ENCODE measurements at regions of chr21 and their contacts with region 1.

Region 1: DNA sequence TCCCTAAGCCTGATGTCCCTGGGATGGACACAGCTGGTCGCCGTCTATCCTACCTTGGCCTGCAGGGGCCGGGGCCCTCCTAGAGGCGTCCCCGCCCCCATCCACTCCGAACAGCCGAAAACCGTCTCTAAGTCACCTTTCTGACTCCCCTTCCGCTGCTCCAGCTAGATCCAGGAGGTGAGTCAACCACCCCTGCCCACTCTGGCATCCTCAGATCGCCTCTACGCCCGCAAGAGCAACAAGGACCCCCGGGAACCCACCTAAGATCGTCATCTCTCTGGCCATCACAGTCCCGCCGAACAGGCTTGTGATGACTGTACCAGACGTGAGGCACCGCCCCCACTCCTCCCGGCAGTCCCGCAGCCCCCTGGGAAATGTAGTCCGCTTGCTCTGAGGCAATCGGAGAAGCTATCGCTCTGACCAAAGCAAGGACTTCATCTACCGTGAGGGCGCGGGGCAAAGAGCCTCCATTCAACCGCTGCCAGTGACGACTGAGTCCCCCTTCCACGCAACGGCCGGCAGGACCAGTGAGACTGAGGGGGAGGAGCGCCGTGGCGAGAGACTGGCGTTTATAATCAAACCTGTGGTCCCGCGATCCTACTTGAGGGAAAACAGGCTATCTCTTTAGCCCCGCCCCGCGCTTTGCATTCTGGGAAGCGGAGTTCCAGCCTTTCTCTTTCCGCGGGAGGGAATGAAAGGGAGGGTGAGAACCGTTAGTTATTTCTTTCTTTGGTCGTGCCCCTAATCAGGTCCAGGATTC is at the start of gene HSPA13:
- DNase-seq: peak; percentile 100
- H3K4me3 Mint-ChIP-seq: peak within 1 kb of the TSS; percentile 95
- H3K27ac Mint-ChIP-seq: peak within 1 kb of the TSS; percentile 95
- H3K4me1 Mint-ChIP-seq: peaks cover 27% of the 10 kb centered on the region
- H3K27me3 Mint-ChIP-seq: no peaks in the 10 kb centered on the region
- total RNA-seq, gene HSPA13: 48.5 to 49.1 TPM

Region 2: DNA sequence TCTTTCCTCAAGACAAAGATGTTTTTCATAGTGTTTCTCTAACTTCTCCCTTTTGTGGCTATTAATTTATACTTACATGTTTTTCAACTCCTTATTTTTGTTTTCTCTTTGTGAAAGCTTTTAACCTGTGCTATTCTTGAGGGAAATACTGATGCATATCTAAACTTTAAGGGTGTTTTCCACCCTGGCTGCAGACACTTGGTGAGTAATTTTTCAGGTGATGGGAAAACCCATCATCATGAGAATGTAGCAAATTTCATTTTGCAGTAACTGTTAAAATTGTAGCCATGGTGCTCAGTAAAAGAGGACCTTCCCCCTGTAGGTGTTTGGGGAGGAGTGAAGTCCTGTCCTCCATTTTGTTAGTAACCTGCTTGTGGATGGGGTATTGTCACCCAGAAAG is 296.5 kb before region 1 on chr21:
- CTCF ChIA-PET with region 1: no interaction called
- POLR2A ChIA-PET with region 1: no interaction called
- intact Hi-C with region 1: no loop called
- DNase-seq: peak; percentile 16
- H3K4me3 Mint-ChIP-seq: no peak overlapping the region
- H3K27ac Mint-ChIP-seq: peak overlapping the region; percentile 28
- H3K4me1 Mint-ChIP-seq: peaks cover 15% of the 10 kb centered on the region
- H3K27me3 Mint-ChIP-seq: no peaks in the 10 kb centered on the region

Region 3: DNA sequence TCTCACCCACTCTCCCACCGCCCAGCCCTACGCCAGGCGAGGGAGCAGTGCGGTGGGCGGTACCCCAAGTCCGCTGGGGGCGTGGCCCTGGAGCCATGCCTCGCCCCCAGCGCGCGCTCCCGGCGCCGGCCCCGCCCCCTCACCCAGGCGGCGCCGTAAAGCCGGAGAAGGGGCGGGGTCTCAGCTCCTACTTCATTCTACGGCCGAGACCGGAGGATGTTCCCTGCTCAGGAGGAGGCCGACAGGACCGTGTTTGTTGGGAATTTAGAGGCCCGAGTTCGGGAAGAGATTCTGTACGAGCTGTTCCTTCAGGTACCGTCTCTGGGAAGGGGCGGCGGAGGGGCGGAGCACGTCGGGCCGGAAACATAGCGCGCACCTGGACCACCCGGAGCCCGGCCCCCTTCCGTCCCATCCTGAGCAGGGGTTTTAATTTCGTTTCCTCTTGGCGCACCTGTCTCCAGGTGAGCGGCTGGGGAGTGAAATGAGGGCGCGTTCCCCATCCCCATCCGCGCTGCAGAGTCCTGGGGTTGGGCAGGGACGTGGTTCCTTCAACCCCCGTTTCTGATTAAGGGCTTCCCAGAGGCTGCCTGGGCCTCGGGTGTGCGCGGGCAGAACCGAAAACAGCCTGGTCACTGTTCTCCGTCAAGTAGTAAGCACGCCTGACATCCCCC is 166.9 kb before region 1 on chr21 and contains the start of gene RBM11:
- CTCF ChIA-PET with region 1: no interaction called
- POLR2A ChIA-PET with region 1: no interaction called
- intact Hi-C with region 1: loop called (anchors 1 kb)
- DNase-seq: peak; percentile 79
- H3K4me3 Mint-ChIP-seq: peak within 1 kb of the TSS; percentile 75
- H3K27ac Mint-ChIP-seq: no peak within 1 kb of the TSS
- H3K4me1 Mint-ChIP-seq: peaks cover 4% of the 10 kb centered on the region
- H3K27me3 Mint-ChIP-seq: peaks cover 3% of the 10 kb centered on the region
- total RNA-seq, gene RBM11: 1.5 to 3.1 TPM

Region 4: GRCh38 chr21:14454016-14455009 is 71.3 kb after region 1 on chr21:
- CTCF ChIA-PET with region 1: interaction called, 3 read pairs
- POLR2A ChIA-PET with region 1: no interaction called
- intact Hi-C with region 1: loop called (anchors 1 kb)
- DNase-seq: no peak
- H3K4me3 Mint-ChIP-seq: no peak overlapping the region
- H3K27ac Mint-ChIP-seq: peak overlapping the region; percentile 74
- H3K4me1 Mint-ChIP-seq: peaks cover 42% of the 10 kb centered on the region
- H3K27me3 Mint-ChIP-seq: no peaks in the 10 kb centered on the region

Region 5: DNA sequence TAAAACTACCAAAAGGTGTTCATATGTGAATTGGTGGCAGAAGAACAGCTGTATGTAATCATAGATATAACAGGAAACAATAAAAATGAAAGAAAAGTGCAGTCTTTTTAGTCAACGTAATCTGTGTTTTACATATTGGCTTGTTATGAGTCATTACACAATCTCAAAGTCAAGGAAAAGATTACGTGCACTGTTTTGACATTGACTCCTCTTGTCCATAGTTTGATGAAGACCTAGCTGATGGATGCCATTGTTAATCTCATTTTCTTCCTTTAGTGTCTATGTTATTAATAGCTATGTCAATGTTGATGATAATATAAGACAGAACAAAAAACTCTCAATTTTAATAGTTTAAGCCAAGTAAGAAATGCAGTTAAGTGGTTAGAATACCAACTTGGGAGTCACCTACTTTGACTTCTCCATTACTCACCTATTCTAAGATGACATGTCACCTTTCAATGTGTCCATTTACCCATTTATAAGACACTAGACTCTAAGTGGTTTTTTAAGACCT is 247.6 kb after region 1 on chr21:
- CTCF ChIA-PET with region 1: no interaction called
- POLR2A ChIA-PET with region 1: interaction called, 3 read pairs
- intact Hi-C with region 1: loop called (anchors 1 kb)
- DNase-seq: no peak
- H3K4me3 Mint-ChIP-seq: no peak overlapping the region
- H3K27ac Mint-ChIP-seq: peak overlapping the region; percentile 70
- H3K4me1 Mint-ChIP-seq: peaks cover 27% of the 10 kb centered on the region
- H3K27me3 Mint-ChIP-seq: no peaks in the 10 kb centered on the region

Region 6: GRCh38 chr21:14737922-14738321 is 354.9 kb after region 1 on chr21:
- CTCF ChIA-PET with region 1: interaction called, 10 read pairs
- POLR2A ChIA-PET with region 1: no interaction called
- intact Hi-C with region 1: loop called (anchors 5 kb)
- DNase-seq: peak; percentile 38
- H3K4me3 Mint-ChIP-seq: no peak overlapping the region
- H3K27ac Mint-ChIP-seq: no peak overlapping the region
- H3K4me1 Mint-ChIP-seq: peaks cover 31% of the 10 kb centered on the region
- H3K27me3 Mint-ChIP-seq: no peaks in the 10 kb centered on the region

Region 7: GRCh38 chr21:15729674-15730483 is 1346.9 kb after region 1 on chr21 and contains the start of gene USP25:
- CTCF ChIA-PET with region 1: no interaction called
- POLR2A ChIA-PET with region 1: no interaction called
- intact Hi-C with region 1: loop called (anchors 1 kb)
- DNase-seq: peak; percentile 89
- H3K4me3 Mint-ChIP-seq: peak within 1 kb of the TSS; percentile 83
- H3K27ac Mint-ChIP-seq: peak within 1 kb of the TSS; percentile 77
- H3K4me1 Mint-ChIP-seq: peaks cover 20% of the 10 kb centered on the region
- H3K27me3 Mint-ChIP-seq: peaks cover 2% of the 10 kb centered on the region
- total RNA-seq, gene USP25: 31.2 to 31.7 TPM

Measured in activated CD4-positive, alpha-beta memory T cell treated with anti-CD3 and anti-CD28 coated beads for 36 hours (primary cell).